SK-N-SH (cell line): ENCODE measurements at regions of chr15 and their contacts with region 1.

Region 1: GRCh38 chr15:89057504-89058133 is 30.6 kb upstream of the ABHD2 start:
- DNase-seq: peak; percentile 88
- H3K4me3 ChIP-seq: no peak overlapping the region; a peak in 1 of 4 replicates
- H3K27ac ChIP-seq: no peak overlapping the region
- H3K4me1 ChIP-seq: peaks cover 0 to 2% of the 10 kb centered on the region in 2 experiments; a peak in 1 of 4 replicates
- H3K27me3 ChIP-seq: no peaks in the 10 kb centered on the region
- CTCF ChIP-seq: peak; percentile 99
- EP300 ChIP-seq: no peak
- RAD21 ChIP-seq: peak; percentile 98

Region 2: DNA sequence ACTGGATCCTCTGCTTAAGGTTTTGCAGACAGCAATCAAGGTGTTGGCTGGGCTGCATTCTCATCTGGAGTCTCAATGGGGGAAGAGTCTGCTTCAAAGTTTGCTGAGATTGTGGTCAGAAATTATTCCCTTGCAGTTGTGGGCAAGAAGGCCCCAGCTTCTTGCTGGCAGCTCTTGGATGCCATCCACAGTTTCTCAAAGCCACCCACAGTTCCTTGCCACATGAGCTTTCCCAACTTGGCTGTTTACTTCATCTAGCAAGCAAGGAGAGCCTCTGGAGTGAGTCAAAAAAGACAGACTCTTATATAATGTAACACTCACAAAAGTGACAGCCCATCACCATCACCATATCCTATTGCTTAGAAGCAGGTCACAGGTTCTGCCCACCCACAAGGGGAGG is 31.5 kb before region 1 on chr15:
- CTCF ChIA-PET with region 1: interaction called, 14 read pairs
- POLR2A ChIA-PET with region 1: no interaction called
- DNase-seq: no peak
- H3K4me3 ChIP-seq: no peak overlapping the region
- H3K27ac ChIP-seq: no peak overlapping the region
- H3K4me1 ChIP-seq: no peaks in the 10 kb centered on the region
- H3K27me3 ChIP-seq: no peaks in the 10 kb centered on the region
- CTCF ChIP-seq: no peak
- EP300 ChIP-seq: no peak
- RAD21 ChIP-seq: no peak

Region 3: GRCh38 chr15:89075846-89076245 is 18.2 kb after region 1 on chr15:
- CTCF ChIA-PET with region 1: interaction called, 13 read pairs
- POLR2A ChIA-PET with region 1: no interaction called
- DNase-seq: no peak
- H3K4me3 ChIP-seq: no peak overlapping the region
- H3K27ac ChIP-seq: no peak overlapping the region
- H3K4me1 ChIP-seq: no peaks in the 10 kb centered on the region
- H3K27me3 ChIP-seq: no peaks in the 10 kb centered on the region
- CTCF ChIP-seq: no peak
- EP300 ChIP-seq: no peak
- RAD21 ChIP-seq: no peak

Region 4: GRCh38 chr15:89112341-89112971 is 54.8 kb after region 1 on chr15:
- CTCF ChIA-PET with region 1: interaction called, 11 read pairs
- POLR2A ChIA-PET with region 1: no interaction called
- DNase-seq: no peak
- H3K4me3 ChIP-seq: no peak overlapping the region
- H3K27ac ChIP-seq: peak overlapping the region; percentile 51 to 68
- H3K4me1 ChIP-seq: peaks cover 14 to 54% of the 10 kb centered on the region in 2 experiments
- H3K27me3 ChIP-seq: no peaks in the 10 kb centered on the region
- CTCF ChIP-seq: no peak
- EP300 ChIP-seq: no peak; a peak in 1 of 4 replicates
- RAD21 ChIP-seq: no peak

Region 5: DNA sequence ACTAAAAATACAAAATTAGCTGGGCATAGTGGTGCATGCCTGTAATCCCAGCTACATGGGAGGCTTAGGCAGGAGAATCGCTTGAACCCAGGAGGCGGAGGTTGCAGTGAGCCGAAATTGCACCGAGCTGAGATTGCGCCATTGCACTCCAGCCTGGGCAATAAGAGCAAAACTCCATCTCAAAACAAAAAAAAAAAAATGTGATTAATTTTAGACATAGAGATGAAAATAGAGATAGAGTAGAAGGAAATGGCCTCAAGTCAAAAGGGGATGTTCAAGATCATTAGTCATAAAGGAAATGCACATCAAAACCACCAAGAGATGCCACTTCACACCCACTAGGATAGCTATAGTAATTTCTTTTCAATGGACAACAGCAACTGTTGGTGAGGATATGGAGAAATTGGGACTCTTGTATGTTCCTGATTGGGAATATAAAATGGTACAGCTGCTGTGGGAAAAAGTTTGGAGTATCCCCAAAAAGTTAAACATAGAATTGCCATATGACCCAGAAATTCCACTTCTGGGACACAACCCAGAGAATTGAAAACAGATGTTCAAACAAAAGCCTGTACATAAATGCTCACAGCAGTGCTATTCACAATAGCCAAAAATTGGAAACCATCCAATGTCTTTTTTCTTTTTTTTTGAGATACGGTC is 86.0 kb after region 1 on chr15:
- CTCF ChIA-PET with region 1: interaction called, 16 read pairs
- POLR2A ChIA-PET with region 1: no interaction called
- DNase-seq: peak; percentile 36
- H3K4me3 ChIP-seq: peak overlapping the region in 1 of 2 experiments; percentile 18; a peak in 1 of 4 replicates
- H3K27ac ChIP-seq: peak overlapping the region; percentile 77 to 96; a peak in 3 of 4 replicates
- H3K4me1 ChIP-seq: peaks cover 19 to 46% of the 10 kb centered on the region in 2 experiments
- H3K27me3 ChIP-seq: no peaks in the 10 kb centered on the region
- CTCF ChIP-seq: no peak
- EP300 ChIP-seq: peak; percentile 26 to 54
- RAD21 ChIP-seq: no peak

Region 6: DNA sequence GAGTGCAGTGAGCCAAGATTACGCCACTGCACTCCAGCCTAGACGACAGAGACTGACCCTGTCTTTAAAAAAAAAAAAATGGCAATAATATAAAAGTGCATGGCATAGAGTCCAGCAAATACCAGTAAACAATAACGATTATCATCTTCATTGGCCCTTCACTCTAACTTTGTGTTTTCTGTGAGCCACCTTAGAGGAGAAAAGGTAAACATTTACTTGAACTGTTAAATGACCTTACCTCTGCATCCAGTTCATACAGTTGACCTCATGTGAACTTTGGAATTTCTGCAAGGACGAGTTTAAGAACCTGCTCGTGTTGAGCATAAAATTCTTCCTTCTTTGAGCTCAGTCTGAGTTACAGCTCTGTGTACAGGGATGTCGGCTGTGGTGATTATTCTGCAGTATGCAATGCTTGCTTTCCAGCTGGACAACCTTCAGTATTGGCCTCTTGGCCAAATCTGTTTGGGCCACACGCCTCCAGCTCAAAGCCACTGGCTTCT is 107.1 kb after region 1 on chr15:
- CTCF ChIA-PET with region 1: interaction called, 25 read pairs
- POLR2A ChIA-PET with region 1: no interaction called
- DNase-seq: no peak
- H3K4me3 ChIP-seq: no peak overlapping the region
- H3K27ac ChIP-seq: no peak overlapping the region
- H3K4me1 ChIP-seq: peaks cover 28 to 30% of the 10 kb centered on the region in 2 experiments
- H3K27me3 ChIP-seq: no peaks in the 10 kb centered on the region
- CTCF ChIP-seq: no peak
- EP300 ChIP-seq: no peak
- RAD21 ChIP-seq: no peak

Region 7: DNA sequence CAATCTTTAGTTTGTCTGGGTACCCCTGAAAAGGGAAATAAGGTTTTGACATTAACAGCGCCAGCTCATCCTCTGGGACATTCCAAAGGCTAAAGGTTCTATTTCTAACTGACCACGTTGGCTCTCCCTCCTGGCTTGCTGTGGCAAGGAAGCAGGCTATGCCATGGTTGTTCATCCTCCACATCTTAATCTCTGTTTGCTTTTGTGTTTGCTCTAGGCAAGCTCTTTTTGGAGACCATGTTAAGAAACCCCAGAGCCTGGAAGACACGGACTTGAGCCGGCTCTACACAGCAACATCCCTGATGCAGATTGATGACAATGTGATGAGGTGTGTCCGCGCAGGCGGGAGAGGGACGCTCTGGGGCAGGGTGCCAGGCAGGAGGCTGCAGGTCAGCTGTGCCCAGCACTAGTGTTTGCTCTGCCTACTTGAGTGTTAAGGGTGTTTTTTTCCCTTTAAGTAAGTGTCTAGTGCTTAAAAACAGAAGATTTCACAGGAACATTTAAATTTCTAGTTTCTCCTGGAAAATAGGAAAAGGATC is 130.4 kb after region 1 on chr15:
- CTCF ChIA-PET with region 1: interaction called, 363 read pairs
- POLR2A ChIA-PET with region 1: no interaction called
- DNase-seq: no peak
- H3K4me3 ChIP-seq: no peak overlapping the region
- H3K27ac ChIP-seq: no peak overlapping the region
- H3K4me1 ChIP-seq: peaks cover 4 to 9% of the 10 kb centered on the region in 2 experiments; a peak in 1 of 4 replicates
- H3K27me3 ChIP-seq: no peaks in the 10 kb centered on the region
- CTCF ChIP-seq: no peak
- EP300 ChIP-seq: no peak
- RAD21 ChIP-seq: no peak

Region 8: GRCh38 chr15:90286678-90287077 is 1229.1 kb after region 1 on chr15:
- CTCF ChIA-PET with region 1: no interaction called
- POLR2A ChIA-PET with region 1: no interaction called
- DNase-seq: peak; percentile 69
- H3K4me3 ChIP-seq: no peak overlapping the region
- H3K27ac ChIP-seq: peak overlapping the region in 1 of 2 experiments; percentile 12; a peak in 1 of 4 replicates
- H3K4me1 ChIP-seq: peaks cover 0 to 3% of the 10 kb centered on the region in 2 experiments; a peak in 1 of 4 replicates
- H3K27me3 ChIP-seq: no peaks in the 10 kb centered on the region
- CTCF ChIP-seq: peak; percentile 64
- EP300 ChIP-seq: no peak
- RAD21 ChIP-seq: peak; percentile 76